PC-3 (cell line): ENCODE measurements at regions of chr7 and their contacts with region 1.

Region 1: GRCh38 chr7:98119256-98119918 is 12.7 kb downstream of the LMTK2 start:
- DNase-seq: peak; percentile 79
- ATAC-seq: peak; percentile 89
- H3K4me3 ChIP-seq: peak overlapping the region; percentile 48
- H3K27ac ChIP-seq: peak overlapping the region; percentile 67
- H3K4me1 ChIP-seq: peaks cover 38% of the 10 kb centered on the region
- H3K27me3 ChIP-seq: no peaks in the 10 kb centered on the region
- CTCF ChIP-seq: no peak

Region 2: GRCh38 chr7:98011996-98012395 is 107.4 kb before region 1 on chr7:
- CTCF ChIA-PET with region 1: no interaction called
- POLR2A ChIA-PET with region 1: no interaction called
- intact Hi-C with region 1: no loop called
- DNase-seq: no peak
- ATAC-seq: no peak
- H3K4me3 ChIP-seq: no peak overlapping the region
- H3K27ac ChIP-seq: no peak overlapping the region
- H3K4me1 ChIP-seq: no peaks in the 10 kb centered on the region
- H3K27me3 ChIP-seq: no peaks in the 10 kb centered on the region
- CTCF ChIP-seq: no peak

Region 3: GRCh38 chr7:98133181-98133580 is 13.8 kb after region 1 on chr7:
- CTCF ChIA-PET with region 1: interaction called, 7 read pairs
- POLR2A ChIA-PET with region 1: interaction called, 3 read pairs
- intact Hi-C with region 1: loop called (anchors 2 kb)
- DNase-seq: peak; percentile 73
- ATAC-seq: peak; percentile 58
- H3K4me3 ChIP-seq: peak overlapping the region; percentile 16; the same call in 1 of the 2 replicates
- H3K27ac ChIP-seq: peak overlapping the region; percentile 64
- H3K4me1 ChIP-seq: peaks cover 57% of the 10 kb centered on the region
- H3K27me3 ChIP-seq: no peaks in the 10 kb centered on the region
- CTCF ChIP-seq: no peak